GM10248 (cell line): ENCODE measurements at regions of chr7 and their contacts with region 1.

Region 1: DNA sequence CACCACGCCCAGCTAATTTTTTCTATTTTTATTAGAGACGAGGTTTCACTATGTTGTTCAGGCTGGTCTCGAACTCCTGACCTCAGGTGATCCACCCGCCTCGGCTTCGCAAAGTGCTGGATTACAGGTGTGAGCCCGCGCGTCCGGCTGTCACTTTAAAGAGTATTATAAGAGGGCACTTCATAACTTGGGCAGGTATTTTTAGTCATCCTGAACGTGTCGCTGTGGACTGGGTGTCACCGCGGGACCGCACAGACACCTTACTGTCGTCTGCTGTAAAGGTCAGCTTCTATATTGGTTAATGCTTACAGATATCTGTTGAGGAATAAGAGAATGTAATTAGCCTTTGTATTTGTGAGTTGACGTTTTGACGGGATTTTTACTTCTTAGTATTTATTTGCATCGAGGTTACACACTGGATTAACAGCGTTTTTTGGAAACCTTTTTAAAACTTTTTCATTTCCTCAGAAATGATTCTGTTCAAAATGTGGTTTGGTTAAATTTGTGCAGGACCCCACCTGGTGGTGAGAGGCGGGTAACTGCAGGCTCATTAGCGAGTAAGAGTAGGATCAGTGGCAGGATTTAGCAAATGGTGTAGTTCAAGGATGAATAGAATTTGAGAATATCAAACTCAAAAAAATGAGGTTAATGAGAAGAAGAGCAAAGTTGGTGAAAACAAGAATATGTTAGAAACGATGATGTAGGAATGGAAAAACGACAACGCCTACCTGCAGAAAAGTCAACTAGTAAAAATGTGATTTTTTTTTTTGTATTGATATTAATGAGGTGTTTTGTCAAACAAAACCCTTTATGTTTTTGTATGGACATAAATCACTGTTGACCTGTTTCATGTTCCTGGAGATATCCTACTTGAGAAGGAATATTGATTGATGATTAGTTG is 3.2 kb downstream of the DNAJB6 start:
- DNase-seq: peak; percentile 73
- CTCF ChIP-seq: peak; percentile 73

Region 2: GRCh38 chr7:157292699-157293412 is 47.2 kb before region 1 on chr7:
- CTCF ChIA-PET with region 1: no interaction called
- POLR2A ChIA-PET with region 1: no interaction called
- DNase-seq: no peak
- CTCF ChIP-seq: no peak

Region 3: DNA sequence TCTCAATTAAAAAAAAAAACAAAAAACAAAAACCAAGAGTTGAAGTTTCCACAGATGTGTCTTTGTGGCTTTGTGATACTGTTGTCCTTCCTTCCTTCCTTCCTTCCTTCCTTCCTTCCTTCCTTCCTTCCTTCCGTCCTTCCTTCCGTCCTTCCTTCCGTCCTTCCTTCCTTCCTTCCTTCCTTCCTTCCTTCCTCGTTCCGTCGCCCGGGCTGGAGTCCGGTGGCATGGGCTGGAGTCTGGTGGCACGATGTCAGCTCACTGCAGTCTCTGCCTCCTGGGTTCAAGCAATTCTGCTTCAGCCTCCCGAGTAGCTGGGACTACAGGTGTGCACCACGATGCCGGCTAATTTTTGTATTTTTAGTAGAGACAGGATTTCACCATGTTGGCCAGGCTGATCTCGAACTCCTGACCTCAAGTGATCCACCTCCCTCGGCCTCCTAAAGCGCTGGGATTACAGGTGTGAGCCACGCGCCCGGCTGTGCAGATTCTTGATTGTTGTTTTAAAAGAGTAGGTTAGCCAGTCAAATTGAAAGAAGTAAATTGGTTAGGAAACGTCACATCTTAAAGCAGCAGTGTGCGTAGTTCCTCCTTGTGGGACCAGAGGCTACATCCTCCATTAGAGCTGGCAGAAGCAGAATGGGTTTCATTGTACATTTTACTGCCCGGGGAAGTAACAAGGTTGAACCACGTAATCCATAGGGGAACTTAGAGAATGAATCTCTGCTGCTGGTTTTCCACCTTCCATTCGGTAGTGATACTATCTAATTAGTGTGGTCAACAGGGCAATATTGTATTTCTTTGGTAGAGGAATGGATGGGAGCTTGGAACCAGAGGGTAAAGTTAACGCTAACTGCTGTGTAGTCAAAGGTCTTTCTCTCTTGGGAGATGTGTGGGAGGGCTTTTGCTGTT is 17.4 kb after region 1 on chr7:
- CTCF ChIA-PET with region 1: interaction called, 39 read pairs
- POLR2A ChIA-PET with region 1: no interaction called
- DNase-seq: peak; percentile 81
- CTCF ChIP-seq: no peak